ENCODE measurements at regions of chr4 and their contacts with region 1.

Region 1: GRCh38 chr4:17544205-17544604 is 29.2 kb downstream of the CLRN2 start:
- DNase-seq: no peak
- H3K4me3 Mint-ChIP-seq: no peak overlapping the region
- H3K27ac Mint-ChIP-seq: no peak overlapping the region
- H3K4me1 Mint-ChIP-seq: no peaks in the 10 kb centered on the region
- H3K27me3 Mint-ChIP-seq: peaks cover 13% of the 10 kb centered on the region

Region 2: GRCh38 chr4:17397611-17398010 is 146.6 kb before region 1 on chr4:
- CTCF ChIA-PET with region 1: no interaction called
- POLR2A ChIA-PET with region 1: no interaction called
- intact Hi-C with region 1: no loop called
- DNase-seq: no peak
- H3K4me3 Mint-ChIP-seq: no peak overlapping the region
- H3K27ac Mint-ChIP-seq: no peak overlapping the region
- H3K4me1 Mint-ChIP-seq: no peaks in the 10 kb centered on the region
- H3K27me3 Mint-ChIP-seq: peaks cover 1% of the 10 kb centered on the region

Region 3: DNA sequence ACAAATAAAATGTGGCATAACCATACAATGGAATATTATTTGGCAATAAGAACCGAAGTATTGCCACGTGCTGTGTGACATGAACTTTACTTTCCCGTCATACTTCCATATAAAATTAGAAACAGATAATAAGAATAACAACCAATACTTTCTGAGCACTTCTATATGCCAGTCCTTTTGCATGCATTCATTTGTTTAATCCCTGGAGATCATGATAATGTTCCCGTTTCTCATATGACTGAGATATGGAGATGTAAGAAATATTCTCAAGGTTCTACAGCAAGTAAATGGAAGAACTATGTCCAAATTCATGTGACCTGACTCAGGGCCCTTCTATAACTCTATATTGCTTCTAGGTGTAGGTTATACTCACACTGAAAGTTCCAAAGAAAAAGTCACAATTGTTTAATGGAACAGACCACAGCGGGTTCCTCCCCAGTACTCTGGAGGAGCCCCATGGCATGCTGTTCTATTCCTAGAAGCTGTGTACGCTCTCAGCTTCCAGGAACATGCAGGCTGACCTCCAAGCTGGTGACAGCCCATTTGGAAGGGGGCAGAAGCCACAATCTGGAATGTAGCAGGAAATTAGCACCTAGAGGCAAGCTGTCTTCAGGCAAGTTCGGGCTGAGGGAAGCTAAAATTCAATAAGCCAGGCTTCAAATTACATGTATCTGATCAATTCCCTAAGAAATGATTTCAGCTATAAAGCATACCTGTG is 63.8 kb before region 1 on chr4:
- CTCF ChIA-PET with region 1: no interaction called
- POLR2A ChIA-PET with region 1: no interaction called
- intact Hi-C with region 1: no loop called
- DNase-seq: no peak
- H3K4me3 Mint-ChIP-seq: no peak overlapping the region
- H3K27ac Mint-ChIP-seq: no peak overlapping the region
- H3K4me1 Mint-ChIP-seq: no peaks in the 10 kb centered on the region
- H3K27me3 Mint-ChIP-seq: no peaks in the 10 kb centered on the region

Region 4: GRCh38 chr4:17636696-17637622 is 92.8 kb after region 1 on chr4:
- CTCF ChIA-PET with region 1: interaction called, 50 read pairs
- POLR2A ChIA-PET with region 1: no interaction called
- intact Hi-C with region 1: loop called (anchors 1 kb)
- DNase-seq: peak; percentile 82
- H3K4me3 Mint-ChIP-seq: no peak overlapping the region
- H3K27ac Mint-ChIP-seq: no peak overlapping the region
- H3K4me1 Mint-ChIP-seq: no peaks in the 10 kb centered on the region
- H3K27me3 Mint-ChIP-seq: no peaks in the 10 kb centered on the region

Measured in activated CD4-positive, alpha-beta memory T cell treated with anti-CD3 and anti-CD28 coated beads for 36 hours (primary cell).